A549 (cell line): ENCODE measurements at regions of chr4 and their contacts with region 1.

Region 1: GRCh38 chr4:10013722-10014121 is 7.6 kb downstream of the SLC2A9 start:
- DNase-seq: peak in 1 of 2 experiments; percentile 40
- ATAC-seq: peak; percentile 79 to 87; a peak in 5 of 6 replicates
- H3K4me3 ChIP-seq: no peak overlapping the region
- H3K27ac ChIP-seq: no peak overlapping the region
- H3K4me1 ChIP-seq: peaks cover 6% of the 10 kb centered on the region
- CTCF ChIP-seq: peak; percentile 43
- EP300 ChIP-seq: no peak
- POLR2A ChIP-seq: no peak
- RAD21 ChIP-seq: peak; percentile 46 to 51

Region 2: GRCh38 chr4:9704551-9705332 is 309.0 kb before region 1 on chr4:
- CTCF ChIA-PET with region 1: interaction called, 39 read pairs
- POLR2A ChIA-PET with region 1: no interaction called
- DNase-seq: no peak
- ATAC-seq: no peak
- H3K4me3 ChIP-seq: no peak overlapping the region
- H3K27ac ChIP-seq: no peak overlapping the region
- H3K4me1 ChIP-seq: no peaks in the 10 kb centered on the region
- CTCF ChIP-seq: no peak
- EP300 ChIP-seq: no peak
- POLR2A ChIP-seq: no peak
- RAD21 ChIP-seq: no peak

Region 3: GRCh38 chr4:9762823-9763475 is 250.8 kb before region 1 on chr4:
- CTCF ChIA-PET with region 1: interaction called, 55 read pairs
- POLR2A ChIA-PET with region 1: no interaction called
- DNase-seq: peak; percentile 17 to 69
- ATAC-seq: peak; percentile 30 to 62; a peak in 3 of 6 replicates
- H3K4me3 ChIP-seq: no peak overlapping the region
- H3K27ac ChIP-seq: no peak overlapping the region
- H3K4me1 ChIP-seq: no peaks in the 10 kb centered on the region
- CTCF ChIP-seq: peak; percentile 58
- EP300 ChIP-seq: no peak
- POLR2A ChIP-seq: no peak
- RAD21 ChIP-seq: peak; percentile 76 to 80